Common myeloid progenitor, CD34-positive (primary cell): ENCODE measurements at regions of chr12 and their contacts with region 1.

Region 1: GRCh38 chr12:15882118-15882971 is at the start of gene STRAP:
- DNase-seq: peak; percentile 98 to 99 (median 99)
- H3K4me3 ChIP-seq: peak within 1 kb of the TSS; percentile 83 to 98 (median 91)
- H3K27ac ChIP-seq: peak within 1 kb of the TSS; percentile 95 to 98
- H3K4me1 ChIP-seq: peaks cover 7 to 27% (median 15%) of the 10 kb centered on the region in 4 experiments
- H3K27me3 ChIP-seq: no peaks in the 10 kb centered on the region

Region 2: DNA sequence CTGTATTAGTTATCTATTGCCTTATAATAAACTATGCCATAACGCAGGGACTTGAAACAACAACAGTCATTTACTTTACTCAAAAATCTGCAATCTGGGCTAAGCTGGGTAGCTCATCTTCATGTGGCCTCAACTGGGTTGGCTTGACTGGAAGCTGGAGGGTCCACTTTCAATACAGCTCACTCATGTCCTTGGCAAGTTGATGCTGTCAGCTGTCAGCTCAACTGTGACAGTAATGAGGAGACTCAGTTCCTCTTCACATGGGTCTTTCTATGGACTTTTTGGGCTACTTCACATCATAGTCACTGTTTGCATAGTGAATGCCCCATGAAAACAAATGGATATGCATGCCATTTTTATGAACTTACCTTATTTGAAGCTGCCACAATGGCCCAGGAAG is 33.7 kb before region 1 on chr12:
- CTCF ChIA-PET with region 1: no interaction called
- POLR2A ChIA-PET with region 1: no interaction called
- DNase-seq: no peak
- H3K4me3 ChIP-seq: no peak overlapping the region
- H3K27ac ChIP-seq: no peak overlapping the region
- H3K4me1 ChIP-seq: no peaks in the 10 kb centered on the region
- H3K27me3 ChIP-seq: no peaks in the 10 kb centered on the region

Region 3: GRCh38 chr12:15863984-15864383 is 18.4 kb before region 1 on chr12:
- CTCF ChIA-PET with region 1: interaction called, 11 read pairs
- POLR2A ChIA-PET with region 1: no interaction called
- DNase-seq: peak; percentile 68 to 95 (median 95)
- H3K4me3 ChIP-seq: peak overlapping the region in 2 of 7 experiments; percentile 4 to 34
- H3K27ac ChIP-seq: no peak overlapping the region
- H3K4me1 ChIP-seq: peaks cover 0 to 12% (median 3%) of the 10 kb centered on the region in 4 experiments
- H3K27me3 ChIP-seq: no peaks in the 10 kb centered on the region

Region 4: GRCh38 chr12:15899282-15899870 is 17.0 kb after region 1 on chr12:
- CTCF ChIA-PET with region 1: interaction called, 23 read pairs
- POLR2A ChIA-PET with region 1: interaction called, 3 read pairs
- DNase-seq: peak; percentile 28 to 58 (median 45)
- H3K4me3 ChIP-seq: no peak overlapping the region
- H3K27ac ChIP-seq: no peak overlapping the region
- H3K4me1 ChIP-seq: no peaks in the 10 kb centered on the region
- H3K27me3 ChIP-seq: no peaks in the 10 kb centered on the region

Region 5: GRCh38 chr12:15931590-15932053 is 49.3 kb after region 1 on chr12:
- CTCF ChIA-PET with region 1: no interaction called
- POLR2A ChIA-PET with region 1: no interaction called
- DNase-seq: peak in 2 of 3 donors; percentile 6 to 19
- H3K4me3 ChIP-seq: no peak overlapping the region
- H3K27ac ChIP-seq: no peak overlapping the region
- H3K4me1 ChIP-seq: no peaks in the 10 kb centered on the region
- H3K27me3 ChIP-seq: no peaks in the 10 kb centered on the region